ENCODE measurements at regions of chr7 and their contacts with region 1.

Region 1: DNA sequence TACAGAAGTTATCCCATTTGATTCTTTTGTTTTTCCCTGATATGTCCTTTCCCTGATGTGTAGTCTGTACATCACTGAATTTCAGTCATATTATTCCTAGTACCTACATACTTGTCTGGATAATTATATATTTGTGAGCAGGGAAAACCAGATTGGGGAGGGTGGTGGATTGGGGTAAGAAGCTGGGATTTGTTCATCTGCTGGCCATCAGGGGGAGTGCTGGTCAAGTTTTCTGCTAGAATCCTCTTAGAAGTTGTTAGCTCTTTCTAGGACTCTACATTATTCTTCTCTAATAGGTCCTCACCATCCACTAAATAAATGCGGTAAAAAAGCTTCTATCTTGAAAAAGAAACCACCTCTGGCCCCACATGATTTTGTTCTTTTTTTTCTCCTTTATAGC is 232.7 kb upstream of the TAC1 start:
- DNase-seq: peak; percentile 40
- CTCF ChIP-seq: peak; percentile 41

Region 2: DNA sequence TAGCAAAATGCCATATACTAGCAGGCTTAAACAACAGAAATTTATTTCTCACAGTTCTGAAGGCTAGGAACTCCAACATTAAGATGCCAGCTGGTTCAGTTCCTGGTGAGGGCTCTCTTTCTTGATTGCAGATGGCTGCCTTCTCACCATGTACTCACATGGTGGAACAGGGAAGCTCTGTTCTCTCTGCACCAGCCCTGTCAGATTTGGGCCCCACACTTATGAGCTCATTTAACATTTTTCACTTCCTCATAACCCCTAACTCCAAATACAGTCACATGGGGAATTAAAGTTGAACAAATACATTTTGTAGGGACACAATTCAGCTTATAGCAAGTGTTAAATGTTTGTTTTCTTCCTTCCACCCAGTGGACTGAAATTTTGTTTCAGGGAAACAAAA is 14.1 kb after region 1 on chr7:
- CTCF ChIA-PET with region 1: interaction called, 16 read pairs
- POLR2A ChIA-PET with region 1: no interaction called
- DNase-seq: peak; percentile 15
- CTCF ChIP-seq: no peak

Region 3: DNA sequence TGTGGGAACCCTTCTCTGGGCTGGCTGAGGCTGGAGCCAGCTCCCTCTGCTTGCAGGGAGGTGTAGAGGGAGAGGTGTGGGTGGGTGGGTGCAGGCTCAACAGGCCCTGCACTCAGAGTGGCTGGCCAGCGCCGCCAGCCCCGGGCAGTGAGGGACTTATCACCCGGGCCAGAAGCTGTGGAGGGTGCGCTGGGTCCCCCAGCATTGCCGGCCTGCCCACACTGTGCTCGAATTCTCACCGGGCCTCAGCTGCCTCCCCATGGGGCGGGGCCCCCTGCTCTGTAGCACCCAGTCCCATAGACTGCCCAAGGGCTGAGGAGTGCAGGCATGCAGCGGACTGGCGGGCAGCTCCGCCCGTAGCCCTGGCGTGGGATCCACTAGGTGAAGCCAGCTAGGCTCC is 42.0 kb after region 1 on chr7:
- CTCF ChIA-PET with region 1: no interaction called
- POLR2A ChIA-PET with region 1: no interaction called
- DNase-seq: no peak
- CTCF ChIP-seq: no peak

Region 4: DNA sequence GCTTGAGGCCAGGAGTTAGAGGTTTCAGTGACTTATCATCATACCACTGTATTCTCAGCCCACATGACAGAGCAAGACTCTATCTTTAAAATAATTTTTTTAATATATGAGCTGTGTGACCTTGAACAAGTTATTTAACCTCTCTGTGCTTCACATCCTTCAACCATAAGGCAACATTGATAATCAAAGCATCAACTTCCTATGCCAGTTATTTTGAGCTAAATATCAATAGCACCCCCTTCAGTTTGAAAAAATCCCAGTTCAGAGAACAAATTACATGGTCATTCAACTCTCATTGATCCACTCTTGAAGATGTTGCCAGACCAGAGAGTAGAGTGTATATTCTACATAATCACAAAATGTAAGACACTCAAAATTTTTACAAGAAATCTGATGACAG is 320.0 kb after region 1 on chr7:
- CTCF ChIA-PET with region 1: interaction called, 11 read pairs
- POLR2A ChIA-PET with region 1: no interaction called
- DNase-seq: no peak
- CTCF ChIP-seq: no peak

Region 5: GRCh38 chr7:97971990-97972943 is 473.1 kb after region 1 on chr7:
- CTCF ChIA-PET with region 1: no interaction called
- POLR2A ChIA-PET with region 1: no interaction called
- DNase-seq: peak; percentile 94
- CTCF ChIP-seq: peak; percentile 53

Measured in GM10248 (cell line).